ENCODE measurements at regions of chr10 and their contacts with region 1.

Region 1: GRCh38 chr10:62050893-62051433 is 149.5 kb downstream of the ARID5B start:
- DNase-seq: no peak
- H3K4me3 ChIP-seq: peak overlapping the region; percentile 61
- H3K27ac ChIP-seq: no peak overlapping the region
- H3K4me1 ChIP-seq: peaks cover 70% of the 10 kb centered on the region
- CTCF ChIP-seq: no peak

Region 2: DNA sequence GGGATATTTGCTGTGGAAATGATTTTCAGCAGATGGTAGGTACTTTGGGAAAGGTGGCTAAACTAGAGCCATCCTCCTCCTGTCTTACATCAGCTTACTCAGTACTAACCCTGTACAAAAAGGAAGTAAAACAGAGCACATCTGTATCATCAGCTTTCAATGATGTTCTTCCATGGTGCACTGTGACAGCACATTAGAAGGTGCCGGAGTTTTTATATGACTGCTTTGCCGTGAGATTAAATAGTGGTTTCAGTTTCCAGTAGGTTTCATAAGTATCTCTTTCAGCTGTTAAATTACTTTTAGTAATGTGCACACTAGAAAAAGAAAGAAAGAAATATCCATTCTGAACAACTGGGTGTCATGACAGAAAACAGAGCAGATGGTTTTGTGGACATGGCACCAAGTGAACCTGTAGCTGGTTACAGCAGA is 63.0 kb before region 1 on chr10:
- CTCF ChIA-PET with region 1: no interaction called
- POLR2A ChIA-PET with region 1: interaction called, 40 read pairs
- intact Hi-C with region 1: loop called (anchors 1 kb)
- DNase-seq: peak; percentile 90
- H3K4me3 ChIP-seq: peak overlapping the region; percentile 55
- H3K27ac ChIP-seq: peak overlapping the region; percentile 99
- H3K4me1 ChIP-seq: peaks cover 98% of the 10 kb centered on the region
- CTCF ChIP-seq: no peak

Region 3: GRCh38 chr10:62038609-62039190 is 12.3 kb before region 1 on chr10:
- CTCF ChIA-PET with region 1: interaction called, 12 read pairs
- POLR2A ChIA-PET with region 1: interaction called, 45 read pairs
- intact Hi-C with region 1: no loop called
- DNase-seq: peak; percentile 85
- H3K4me3 ChIP-seq: peak overlapping the region; percentile 18
- H3K27ac ChIP-seq: peak overlapping the region; percentile 56
- H3K4me1 ChIP-seq: peaks cover 80% of the 10 kb centered on the region
- CTCF ChIP-seq: peak; percentile 98

Region 4: GRCh38 chr10:62109587-62110293 is 58.8 kb after region 1 on chr10:
- CTCF ChIA-PET with region 1: no interaction called
- POLR2A ChIA-PET with region 1: interaction called, 11 read pairs
- intact Hi-C with region 1: no loop called
- DNase-seq: peak; percentile 89
- H3K4me3 ChIP-seq: peak overlapping the region; percentile 46
- H3K27ac ChIP-seq: peak overlapping the region; percentile 90
- H3K4me1 ChIP-seq: peaks cover 59% of the 10 kb centered on the region
- CTCF ChIP-seq: no peak

Region 5: GRCh38 chr10:62456611-62457101 is 405.7 kb after region 1 on chr10:
- CTCF ChIA-PET with region 1: no interaction called
- POLR2A ChIA-PET with region 1: interaction called, 4 read pairs
- intact Hi-C with region 1: loop called (anchors 10 kb)
- DNase-seq: peak; percentile 97
- H3K4me3 ChIP-seq: peak overlapping the region; percentile 14
- H3K27ac ChIP-seq: peak overlapping the region; percentile 80
- H3K4me1 ChIP-seq: peaks cover 49% of the 10 kb centered on the region
- CTCF ChIP-seq: no peak

Measured in OCI-LY7 (cell line).